GM10248 (cell line): ENCODE measurements at regions of chr5 and their contacts with region 1.

Region 1: DNA sequence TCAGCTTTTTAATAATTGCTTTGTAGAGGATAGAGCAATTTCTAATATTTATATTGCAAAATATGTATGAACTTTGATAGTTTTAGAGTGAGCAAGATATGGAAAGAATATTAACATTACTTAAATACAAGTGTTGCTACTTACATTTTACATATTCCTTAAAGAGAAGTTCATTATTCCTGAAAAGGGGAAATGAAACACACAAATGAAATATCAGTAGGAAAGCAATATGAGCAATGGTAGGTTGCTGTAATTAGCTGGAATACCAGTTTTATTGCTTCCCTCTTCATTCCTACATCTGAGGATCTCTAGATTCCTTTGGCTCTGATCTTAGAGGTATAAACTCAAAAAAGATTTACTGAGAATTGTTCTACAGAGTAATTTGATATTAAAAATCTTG is 414.1 kb downstream of the FAM170A start:
- DNase-seq: no peak
- CTCF ChIP-seq: no peak

Region 2: GRCh38 chr5:120062515-120063048 is 19.2 kb after region 1 on chr5:
- CTCF ChIA-PET with region 1: no interaction called
- POLR2A ChIA-PET with region 1: interaction called, 10 read pairs
- DNase-seq: no peak
- CTCF ChIP-seq: no peak

Region 3: DNA sequence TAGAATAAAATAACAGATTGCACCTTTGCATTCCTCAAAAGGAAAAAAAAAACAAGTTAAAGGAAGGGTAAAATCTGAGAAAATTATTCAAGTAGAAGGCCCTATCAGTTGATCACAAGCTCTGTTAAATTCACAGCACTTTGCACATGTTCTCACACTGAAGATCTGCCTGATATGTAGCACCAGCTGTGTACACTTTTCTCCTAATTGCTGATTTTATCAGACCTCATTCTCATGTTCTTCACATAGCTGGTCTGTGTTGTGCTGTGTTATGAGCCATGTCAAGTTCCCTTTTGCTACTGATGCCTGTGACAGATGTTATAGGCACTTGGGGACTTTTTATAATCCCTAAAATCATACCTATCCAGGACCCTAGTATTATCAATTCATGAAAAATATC is 30.3 kb after region 1 on chr5:
- CTCF ChIA-PET with region 1: no interaction called
- POLR2A ChIA-PET with region 1: no interaction called
- DNase-seq: no peak
- CTCF ChIP-seq: no peak